ENCODE measurements at regions of chr2 and their contacts with region 1.

Region 1: GRCh38 chr2:132267105-132267497 is 105.3 kb upstream of the ANKRD30BL start:
- DNase-seq: no peak
- ATAC-seq: no peak
- H3K4me3 ChIP-seq: no peak overlapping the region
- H3K27ac ChIP-seq: no peak overlapping the region
- H3K4me1 ChIP-seq: peaks cover 8% of the 10 kb centered on the region; the same call in 1 of the 2 replicates
- H3K27me3 ChIP-seq: no peaks in the 10 kb centered on the region
- CTCF ChIP-seq: no peak

Region 2: GRCh38 chr2:132547074-132547687 is 280.1 kb after region 1 on chr2:
- CTCF ChIA-PET with region 1: interaction called, 3 read pairs
- POLR2A ChIA-PET with region 1: no interaction called
- intact Hi-C with region 1: loop called (anchors 5 kb)
- DNase-seq: peak; percentile 82
- ATAC-seq: peak; percentile 65
- H3K4me3 ChIP-seq: no peak overlapping the region
- H3K27ac ChIP-seq: no peak overlapping the region
- H3K4me1 ChIP-seq: peaks cover 14% of the 10 kb centered on the region
- H3K27me3 ChIP-seq: no peaks in the 10 kb centered on the region
- CTCF ChIP-seq: peak; percentile 85

Region 3: DNA sequence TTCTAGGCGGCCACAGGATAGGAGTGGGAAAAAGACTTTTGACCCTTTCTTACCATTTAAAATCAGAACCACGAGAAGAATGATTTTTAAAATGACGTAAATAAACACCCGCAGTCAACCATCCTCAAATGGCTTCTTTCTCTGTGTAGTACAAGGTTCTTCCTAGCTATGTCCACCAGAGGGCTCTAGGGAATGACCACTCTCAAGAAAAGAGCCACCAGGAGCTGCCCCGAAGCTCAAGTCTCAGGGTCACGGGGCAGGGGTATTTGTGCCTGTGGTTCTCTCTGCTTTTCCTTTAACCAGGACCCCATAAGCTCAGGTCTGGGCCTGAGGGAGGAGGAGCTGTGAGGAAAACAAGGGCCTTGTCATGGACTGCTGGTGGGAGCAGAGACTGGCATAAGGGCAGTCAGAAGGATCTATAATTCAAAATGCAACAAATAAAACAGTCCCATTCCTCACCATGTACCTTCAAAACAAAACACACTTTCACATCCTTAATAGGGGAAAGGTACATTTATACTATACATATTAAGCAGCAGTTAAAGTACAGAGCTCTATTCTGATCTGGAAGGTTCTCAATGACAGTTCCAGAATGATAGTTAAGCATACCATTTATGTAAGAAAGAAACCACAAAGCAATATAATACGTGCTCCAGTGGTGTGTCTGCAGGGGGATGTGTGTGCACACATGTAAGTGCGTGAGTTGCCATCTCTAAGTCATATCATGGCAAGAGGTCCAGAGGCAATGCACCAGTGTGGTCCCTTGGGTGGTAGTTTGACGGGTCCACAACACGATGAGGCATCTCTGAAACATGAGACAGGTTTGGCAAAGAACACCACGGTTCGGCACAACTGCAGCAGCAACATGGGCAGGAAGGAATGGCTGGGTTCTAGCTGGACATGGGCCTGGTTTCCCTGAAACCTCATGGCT is 384.3 kb after region 1 on chr2:
- CTCF ChIA-PET with region 1: no interaction called
- POLR2A ChIA-PET with region 1: no interaction called
- intact Hi-C with region 1: loop called (anchors 5 kb)
- DNase-seq: peak; percentile 29
- ATAC-seq: no peak
- H3K4me3 ChIP-seq: no peak overlapping the region
- H3K27ac ChIP-seq: no peak overlapping the region
- H3K4me1 ChIP-seq: peaks cover 5% of the 10 kb centered on the region; the same call in 1 of the 2 replicates
- H3K27me3 ChIP-seq: no peaks in the 10 kb centered on the region
- CTCF ChIP-seq: peak; percentile 52

Measured in PC-3 (cell line).